OCI-LY7 (cell line): ENCODE measurements at regions of chr11 and their contacts with region 1.

Region 1: GRCh38 chr11:43504316-43504950 is 145.7 kb downstream of the TTC17 start:
- DNase-seq: peak; percentile 4
- H3K4me3 ChIP-seq: no peak overlapping the region
- H3K27ac ChIP-seq: no peak overlapping the region
- H3K4me1 ChIP-seq: no peaks in the 10 kb centered on the region
- CTCF ChIP-seq: 0 out of 2 replicates have a peak, but pooled peaks have one; percentile 20

Region 2: DNA sequence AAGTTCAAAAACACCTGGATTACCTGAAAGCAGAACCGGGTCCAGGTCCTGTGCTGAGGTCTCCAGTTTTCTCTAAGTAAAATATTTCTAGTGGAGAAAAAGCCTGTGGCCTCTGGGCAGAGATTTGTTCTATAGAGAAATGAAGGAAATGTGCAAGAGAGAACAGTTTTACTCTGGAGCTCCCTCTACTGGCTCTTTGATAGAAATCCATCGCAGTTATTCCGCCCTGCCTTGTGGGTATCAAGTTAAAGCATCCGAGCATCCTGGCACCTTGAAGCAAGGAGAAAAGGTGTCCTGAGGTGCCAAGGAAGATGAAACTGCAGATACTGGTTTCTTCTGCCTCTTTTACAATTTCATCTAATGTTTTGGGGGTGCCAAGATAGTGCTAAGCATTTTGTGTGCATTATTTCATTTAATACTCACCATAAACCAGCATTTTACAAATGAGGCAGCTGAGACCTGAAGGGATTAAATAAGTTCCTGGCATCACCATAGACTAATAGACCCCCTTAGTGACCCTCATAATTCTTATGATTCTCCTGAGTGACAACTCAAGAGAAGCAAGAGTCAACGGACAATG is 63.1 kb after region 1 on chr11:
- CTCF ChIA-PET with region 1: interaction called, 4 read pairs
- POLR2A ChIA-PET with region 1: no interaction called
- intact Hi-C with region 1: loop called (anchors 2 kb)
- DNase-seq: peak; percentile 61
- H3K4me3 ChIP-seq: no peak overlapping the region
- H3K27ac ChIP-seq: no peak overlapping the region
- H3K4me1 ChIP-seq: no peaks in the 10 kb centered on the region
- CTCF ChIP-seq: peak; percentile 88

Region 3: DNA sequence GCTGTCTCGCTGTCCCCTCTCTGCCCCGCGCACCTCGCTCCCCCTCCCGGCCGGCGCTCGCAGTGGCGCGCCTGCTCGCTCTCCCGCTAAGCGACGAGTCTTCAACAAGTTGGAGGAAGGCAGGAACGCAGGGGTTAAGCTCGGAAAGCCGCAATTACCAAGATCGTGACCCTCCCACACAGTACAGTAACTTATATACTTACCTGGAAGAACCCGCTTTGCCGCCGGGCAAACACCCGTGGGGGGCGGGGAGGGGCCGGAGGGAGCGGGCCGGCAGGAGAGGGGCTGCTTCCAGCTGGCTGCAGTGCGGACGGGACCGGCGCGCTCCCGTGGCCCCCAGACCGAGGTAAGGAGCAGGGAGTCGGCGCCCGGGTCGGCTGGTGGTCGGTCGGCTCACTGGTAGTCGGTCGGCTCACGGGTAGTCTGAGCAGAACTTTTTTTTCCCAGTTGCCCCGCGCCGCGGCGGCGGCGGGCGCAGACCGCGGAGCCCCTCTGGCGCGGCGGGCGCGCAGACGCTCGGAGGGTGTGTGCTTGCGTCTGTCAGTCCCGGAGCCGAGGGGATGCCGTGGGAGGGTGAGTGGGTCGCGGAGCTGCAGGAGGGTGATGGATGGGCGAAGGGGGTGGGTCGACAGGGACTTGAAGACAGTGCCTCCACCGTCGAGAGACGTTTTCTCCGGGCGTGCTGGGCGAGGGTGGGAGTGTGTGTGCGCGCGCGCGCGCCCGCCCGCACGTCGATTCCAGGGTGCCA is 74.9 kb after region 1 on chr11:
- CTCF ChIA-PET with region 1: no interaction called
- POLR2A ChIA-PET with region 1: no interaction called
- intact Hi-C with region 1: no loop called
- DNase-seq: peak; percentile 35
- H3K4me3 ChIP-seq: peak overlapping the region; percentile 65
- H3K27ac ChIP-seq: no peak overlapping the region
- H3K4me1 ChIP-seq: peaks cover 5% of the 10 kb centered on the region
- CTCF ChIP-seq: peak; percentile 30; the same call in 1 of the 2 replicates